ENCODE measurements at regions of chr3 and their contacts with region 1.

Region 1: DNA sequence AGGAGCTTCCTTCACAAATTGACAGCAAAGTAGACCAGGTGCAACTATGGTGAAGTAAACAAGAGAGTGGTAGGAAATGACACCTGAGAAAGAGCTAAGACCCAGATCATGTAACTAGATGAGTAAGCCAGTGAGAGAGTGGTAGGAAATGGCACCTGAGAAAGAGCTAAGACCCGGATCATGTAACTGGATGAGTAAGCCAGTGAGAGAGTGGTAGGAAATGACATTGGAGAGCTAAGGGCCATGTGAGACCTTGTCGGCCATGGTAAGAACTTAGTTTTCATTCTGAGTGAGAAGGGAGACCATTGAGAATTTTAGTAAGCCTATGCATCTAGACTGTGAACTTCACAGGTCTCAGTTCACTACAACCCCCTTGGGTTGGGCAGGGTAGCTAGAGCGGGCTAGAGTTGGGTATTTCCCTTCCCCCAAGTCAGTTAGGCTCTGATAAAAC is 5.4 kb upstream of the SENP7 start:
- DNase-seq: peak in 7 of 9 experiments; percentile 2 to 84 (median 28)
- ATAC-seq: peak; percentile 85
- H3K4me3 ChIP-seq: no peak overlapping the region
- H3K4me3 Mint-ChIP-seq: peak overlapping the region; percentile 6
- H3K27ac ChIP-seq: peak overlapping the region; percentile 24 to 78
- H3K27ac Mint-ChIP-seq: peak overlapping the region; percentile 96
- H3K4me1 ChIP-seq: peaks cover 53% of the 10 kb centered on the region
- H3K4me1 Mint-ChIP-seq: peaks cover 60% of the 10 kb centered on the region
- H3K27me3 ChIP-seq: no peaks in the 10 kb centered on the region
- H3K27me3 Mint-ChIP-seq: no peaks in the 10 kb centered on the region
- CTCF ChIP-seq: no peak

Region 2: GRCh38 chr3:101155825-101156224 is 362.6 kb before region 1 on chr3:
- CTCF ChIA-PET with region 1: no interaction called
- POLR2A ChIA-PET with region 1: no interaction called
- intact Hi-C with region 1: no loop called
- DNase-seq: no peak
- ATAC-seq: no peak
- H3K4me3 ChIP-seq: no peak overlapping the region
- H3K4me3 Mint-ChIP-seq: no peak overlapping the region
- H3K27ac ChIP-seq: no peak overlapping the region
- H3K27ac Mint-ChIP-seq: no peak overlapping the region
- H3K4me1 ChIP-seq: no peaks in the 10 kb centered on the region
- H3K4me1 Mint-ChIP-seq: no peaks in the 10 kb centered on the region
- H3K27me3 ChIP-seq: no peaks in the 10 kb centered on the region
- H3K27me3 Mint-ChIP-seq: peaks cover 11% of the 10 kb centered on the region
- CTCF ChIP-seq: no peak

Region 3: GRCh38 chr3:101243285-101244211 is 274.9 kb before region 1 on chr3:
- CTCF ChIA-PET with region 1: no interaction called
- POLR2A ChIA-PET with region 1: no interaction called
- intact Hi-C with region 1: no loop called
- DNase-seq: no peak
- ATAC-seq: no peak
- H3K4me3 ChIP-seq: no peak overlapping the region
- H3K4me3 Mint-ChIP-seq: no peak overlapping the region
- H3K27ac ChIP-seq: no peak overlapping the region
- H3K27ac Mint-ChIP-seq: no peak overlapping the region
- H3K4me1 ChIP-seq: no peaks in the 10 kb centered on the region
- H3K4me1 Mint-ChIP-seq: no peaks in the 10 kb centered on the region
- H3K27me3 ChIP-seq: no peaks in the 10 kb centered on the region
- H3K27me3 Mint-ChIP-seq: no peaks in the 10 kb centered on the region
- CTCF ChIP-seq: no peak

Region 4: GRCh38 chr3:101531473-101532086 is 13.1 kb after region 1 on chr3:
- CTCF ChIA-PET with region 1: interaction called, 4 read pairs
- POLR2A ChIA-PET with region 1: interaction called, 11 read pairs
- intact Hi-C with region 1: loop called in 1 of 2 experiments (anchors 1 kb)
- DNase-seq: peak in 1 of 9 experiments; percentile 21
- ATAC-seq: peak; percentile 61
- H3K4me3 ChIP-seq: no peak overlapping the region
- H3K4me3 Mint-ChIP-seq: peak overlapping the region; percentile 36
- H3K27ac ChIP-seq: no peak overlapping the region
- H3K27ac Mint-ChIP-seq: peak overlapping the region; percentile 80
- H3K4me1 ChIP-seq: peaks cover 28% of the 10 kb centered on the region
- H3K4me1 Mint-ChIP-seq: peaks cover 36% of the 10 kb centered on the region
- H3K27me3 ChIP-seq: no peaks in the 10 kb centered on the region
- H3K27me3 Mint-ChIP-seq: no peaks in the 10 kb centered on the region
- CTCF ChIP-seq: no peak

Region 5: GRCh38 chr3:101544161-101544850 is 25.9 kb after region 1 on chr3:
- CTCF ChIA-PET with region 1: interaction called, 5 read pairs
- POLR2A ChIA-PET with region 1: interaction called, 11 read pairs
- intact Hi-C with region 1: no loop called
- DNase-seq: no peak
- ATAC-seq: peak; percentile 65
- H3K4me3 ChIP-seq: no peak overlapping the region
- H3K4me3 Mint-ChIP-seq: peak overlapping the region; percentile 0
- H3K27ac ChIP-seq: peak overlapping the region in 1 of 2 experiments; percentile 25
- H3K27ac Mint-ChIP-seq: peak overlapping the region; percentile 81
- H3K4me1 ChIP-seq: peaks cover 31% of the 10 kb centered on the region
- H3K4me1 Mint-ChIP-seq: peaks cover 33% of the 10 kb centered on the region
- H3K27me3 ChIP-seq: no peaks in the 10 kb centered on the region
- H3K27me3 Mint-ChIP-seq: no peaks in the 10 kb centered on the region
- CTCF ChIP-seq: no peak

Region 6: DNA sequence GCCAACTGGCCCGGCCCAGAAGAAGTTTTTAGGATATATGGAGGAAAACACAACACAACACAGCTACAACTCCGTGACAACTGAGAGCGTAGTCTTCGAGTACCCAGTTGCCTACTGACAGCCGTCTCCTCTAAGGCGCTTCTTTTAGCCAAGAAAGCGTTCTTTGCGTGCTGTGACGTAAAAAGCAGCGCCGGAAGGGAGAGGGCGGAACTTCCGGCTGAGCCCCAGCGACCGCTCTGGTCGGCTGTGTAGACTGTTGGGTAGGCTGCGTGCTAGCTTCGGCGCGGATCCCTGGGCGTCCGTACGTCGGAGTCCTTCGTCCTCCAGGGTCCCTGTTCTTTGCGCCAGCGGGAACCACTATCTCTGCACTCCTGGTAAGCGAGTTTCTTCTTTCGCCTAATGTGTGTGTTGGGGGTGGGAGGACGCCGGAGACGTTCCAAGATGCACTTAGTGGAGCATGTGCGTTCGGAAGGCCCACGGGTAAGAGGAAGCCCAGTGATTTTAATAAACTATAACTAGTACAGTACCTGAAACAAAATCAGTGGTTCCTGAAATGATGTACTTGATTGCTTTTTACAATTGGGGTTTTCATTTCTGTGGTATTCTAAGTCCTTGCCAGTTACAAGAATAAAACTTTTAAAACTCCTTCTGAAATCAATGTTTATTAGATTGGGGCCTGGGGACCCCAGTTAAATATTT is 43.3 kb after region 1 on chr3 and contains the start of gene TRMT10C:
- CTCF ChIA-PET with region 1: interaction called, 3 read pairs
- POLR2A ChIA-PET with region 1: interaction called, 13 read pairs
- intact Hi-C with region 1: loop called (anchors 1 to 2 kb)
- DNase-seq: peak; percentile 86 to 96 (median 92)
- ATAC-seq: peak; percentile 95
- H3K4me3 ChIP-seq: peak within 1 kb of the TSS; percentile 83 to 96
- H3K4me3 Mint-ChIP-seq: peak within 1 kb of the TSS; percentile 99
- H3K27ac ChIP-seq: peak within 1 kb of the TSS; percentile 86 to 93
- H3K27ac Mint-ChIP-seq: peak within 1 kb of the TSS; percentile 99
- H3K4me1 ChIP-seq: peaks cover 12% of the 10 kb centered on the region
- H3K4me1 Mint-ChIP-seq: peaks cover 27% of the 10 kb centered on the region
- H3K27me3 ChIP-seq: no peaks in the 10 kb centered on the region
- H3K27me3 Mint-ChIP-seq: peaks cover 1% of the 10 kb centered on the region
- CTCF ChIP-seq: no peak
- total RNA-seq, gene TRMT10C: 41.5 to 44.0 TPM

Region 7: DNA sequence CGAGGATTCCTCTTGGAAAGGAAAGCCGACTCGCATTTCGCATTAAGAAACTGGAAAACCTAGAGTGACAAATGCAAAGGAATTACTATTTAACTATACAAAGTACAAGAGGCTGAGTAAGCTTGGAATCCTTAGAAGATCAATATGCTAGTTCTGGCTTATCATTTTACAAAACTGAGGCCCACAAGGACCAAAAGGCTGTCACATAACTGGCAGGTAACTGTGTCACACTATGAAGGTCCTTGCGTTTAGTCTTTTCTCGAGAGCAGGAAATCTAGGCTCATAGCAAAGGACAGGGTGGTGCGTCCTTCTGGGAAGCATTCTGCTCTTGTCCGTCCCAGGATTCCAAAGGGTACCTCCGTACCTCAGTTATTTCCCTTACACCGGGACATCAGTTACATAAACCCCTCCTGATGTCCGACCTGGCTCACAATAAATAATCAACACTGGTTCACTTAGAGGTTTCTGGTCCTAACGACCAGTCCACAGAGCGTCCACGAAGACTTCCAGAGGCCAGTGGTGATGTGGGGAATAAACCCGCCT is 167.5 kb after region 1 on chr3:
- CTCF ChIA-PET with region 1: no interaction called
- POLR2A ChIA-PET with region 1: interaction called, 5 read pairs
- intact Hi-C with region 1: loop called in 1 of 2 experiments (anchors 5 kb)
- DNase-seq: no peak
- ATAC-seq: peak; percentile 3
- H3K4me3 ChIP-seq: peak overlapping the region; percentile 89 to 93
- H3K4me3 Mint-ChIP-seq: peak overlapping the region; percentile 100
- H3K27ac ChIP-seq: peak overlapping the region; percentile 94 to 96
- H3K27ac Mint-ChIP-seq: peak overlapping the region; percentile 99
- H3K4me1 ChIP-seq: peaks cover 39% of the 10 kb centered on the region
- H3K4me1 Mint-ChIP-seq: peaks cover 36% of the 10 kb centered on the region
- H3K27me3 ChIP-seq: no peaks in the 10 kb centered on the region
- H3K27me3 Mint-ChIP-seq: no peaks in the 10 kb centered on the region
- CTCF ChIP-seq: no peak

Region 8: GRCh38 chr3:101762041-101762646 is 243.7 kb after region 1 on chr3:
- CTCF ChIA-PET with region 1: no interaction called
- POLR2A ChIA-PET with region 1: no interaction called
- intact Hi-C with region 1: no loop called
- DNase-seq: no peak
- ATAC-seq: no peak
- H3K4me3 ChIP-seq: no peak overlapping the region
- H3K4me3 Mint-ChIP-seq: no peak overlapping the region
- H3K27ac ChIP-seq: no peak overlapping the region
- H3K27ac Mint-ChIP-seq: no peak overlapping the region
- H3K4me1 ChIP-seq: no peaks in the 10 kb centered on the region
- H3K4me1 Mint-ChIP-seq: peaks cover 19% of the 10 kb centered on the region
- H3K27me3 ChIP-seq: no peaks in the 10 kb centered on the region
- H3K27me3 Mint-ChIP-seq: no peaks in the 10 kb centered on the region
- CTCF ChIP-seq: no peak

Region 9: GRCh38 chr3:101928890-101929289 is 410.4 kb after region 1 on chr3:
- CTCF ChIA-PET with region 1: no interaction called
- POLR2A ChIA-PET with region 1: no interaction called
- intact Hi-C with region 1: no loop called
- DNase-seq: no peak
- ATAC-seq: no peak
- H3K4me3 ChIP-seq: no peak overlapping the region
- H3K4me3 Mint-ChIP-seq: no peak overlapping the region
- H3K27ac ChIP-seq: no peak overlapping the region
- H3K27ac Mint-ChIP-seq: no peak overlapping the region
- H3K4me1 ChIP-seq: peaks cover 19% of the 10 kb centered on the region
- H3K4me1 Mint-ChIP-seq: peaks cover 18% of the 10 kb centered on the region
- H3K27me3 ChIP-seq: no peaks in the 10 kb centered on the region
- H3K27me3 Mint-ChIP-seq: no peaks in the 10 kb centered on the region
- CTCF ChIP-seq: no peak